IMR-90 (cell line): ENCODE measurements at regions of chr15 and their contacts with region 1.

Region 1: DNA sequence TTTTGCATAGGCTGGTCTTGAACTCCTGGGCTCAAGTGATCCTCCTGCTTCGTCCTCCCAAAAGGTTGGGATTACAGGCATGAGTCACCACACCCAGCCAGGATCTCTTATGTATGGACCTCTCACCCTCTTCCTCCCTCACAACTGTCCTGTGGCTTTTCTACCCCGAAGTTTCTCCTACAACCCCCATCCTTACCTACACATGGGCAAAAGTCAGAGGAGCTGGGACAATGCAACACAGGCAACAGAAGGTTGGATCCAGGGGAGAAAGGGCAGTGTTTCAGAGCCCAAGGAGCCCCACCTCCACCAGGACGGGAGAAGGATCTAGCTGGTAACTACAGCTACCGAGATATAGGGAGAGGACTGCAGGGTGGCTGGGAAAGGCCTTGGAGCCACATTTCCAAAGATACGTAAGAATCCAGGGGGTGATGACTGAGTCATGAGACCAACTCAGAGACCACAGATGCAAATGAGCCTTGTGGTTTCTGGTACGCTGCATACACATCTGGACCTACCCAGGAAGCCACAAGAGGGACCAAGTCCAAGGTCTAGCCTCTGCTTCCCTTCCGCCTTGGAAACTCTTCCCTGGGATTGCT is 13.6 kb downstream of the IGDCC4 start:
- DNase-seq: peak; percentile 99
- ATAC-seq: peak; percentile 90
- H3K4me3 ChIP-seq: no peak overlapping the region
- H3K27ac ChIP-seq: no peak overlapping the region
- H3K4me1 ChIP-seq: peaks cover 5% of the 10 kb centered on the region
- H3K27me3 ChIP-seq: peaks cover 5% of the 10 kb centered on the region; the same call in 1 of the 2 replicates
- CTCF ChIP-seq: peak; percentile 24; the same call in 1 of the 2 replicates
- POLR2A ChIP-seq: no peak
- RAD21 ChIP-seq: peak; percentile 22; the same call in 1 of the 2 replicates

Region 2: DNA sequence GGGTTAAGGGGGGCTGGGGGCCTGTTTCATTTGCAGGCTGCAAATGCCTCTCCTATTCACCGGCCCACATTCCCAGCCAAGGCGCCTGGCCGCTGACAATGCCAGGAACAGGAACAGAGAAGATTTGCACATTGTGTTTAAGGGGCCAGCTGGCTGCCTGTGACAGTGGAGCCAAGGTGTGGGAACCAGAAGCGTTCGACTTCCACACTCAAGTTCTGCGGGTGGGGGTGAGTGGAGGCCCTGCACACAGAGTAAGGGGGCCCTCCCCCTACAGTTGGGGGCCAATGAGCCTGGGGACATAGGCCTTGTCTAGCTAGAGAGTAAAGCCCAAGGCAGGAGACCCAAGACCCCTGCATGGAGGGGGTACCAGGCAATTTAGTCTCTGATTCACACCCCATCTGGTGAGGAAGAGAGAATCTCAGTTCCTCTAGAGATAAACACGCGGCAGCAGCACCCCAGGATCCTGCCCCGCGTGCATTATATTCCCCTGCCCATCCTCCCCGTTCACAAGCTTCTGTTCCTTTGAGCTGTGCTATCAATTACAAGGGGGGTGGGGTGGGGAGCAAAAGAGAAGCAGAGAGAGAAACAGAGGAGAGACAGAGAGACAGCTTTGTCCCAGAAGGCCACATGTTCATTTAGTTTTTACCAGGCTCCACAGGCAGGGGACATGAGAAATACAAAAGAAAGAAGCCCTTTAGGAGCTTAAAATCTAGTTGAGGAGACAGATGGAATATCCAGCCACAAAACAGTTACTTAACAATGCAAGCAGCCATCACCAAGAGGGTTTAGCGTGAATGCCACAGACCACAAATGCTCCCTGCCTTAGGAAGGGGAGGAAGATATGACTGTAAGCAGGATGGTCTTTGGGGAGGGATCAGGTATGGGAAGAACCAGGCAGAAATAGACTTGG is 40.6 kb before region 1 on chr15:
- CTCF ChIA-PET with region 1: no interaction called
- POLR2A ChIA-PET with region 1: no interaction called
- dilution Hi-C with region 1: no loop called
- in situ Hi-C with region 1: no loop called
- intact Hi-C with region 1: no loop called
- DNase-seq: no peak
- ATAC-seq: no peak
- H3K4me3 ChIP-seq: no peak overlapping the region
- H3K27ac ChIP-seq: no peak overlapping the region
- H3K4me1 ChIP-seq: peaks cover 2% of the 10 kb centered on the region; the same call in 1 of the 2 replicates
- H3K27me3 ChIP-seq: peaks cover 60% of the 10 kb centered on the region
- CTCF ChIP-seq: no peak
- POLR2A ChIP-seq: no peak
- RAD21 ChIP-seq: no peak

Region 3: DNA sequence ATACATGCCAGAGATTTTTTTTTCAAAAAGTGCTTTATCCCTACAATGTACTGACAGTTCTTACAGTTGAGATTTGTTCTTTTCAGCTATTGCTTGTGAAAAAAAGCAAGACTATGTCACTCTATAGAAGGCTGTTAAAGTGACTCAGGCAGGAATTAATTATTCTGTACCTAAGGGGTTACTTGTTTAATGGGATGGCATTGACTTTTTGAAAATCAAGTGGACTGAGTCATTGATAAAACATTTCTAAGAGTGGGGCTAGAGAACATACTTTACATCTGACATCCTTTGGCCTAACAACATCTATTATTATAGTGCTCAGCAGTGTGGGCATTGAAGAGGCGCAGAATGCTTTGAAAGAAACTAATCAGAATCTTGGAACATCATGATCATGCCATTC is 167.5 kb after region 1 on chr15:
- CTCF ChIA-PET with region 1: no interaction called
- POLR2A ChIA-PET with region 1: no interaction called
- dilution Hi-C with region 1: no loop called
- in situ Hi-C with region 1: no loop called
- intact Hi-C with region 1: loop called (anchors 5 kb)
- DNase-seq: peak; percentile 57
- ATAC-seq: peak; percentile 41
- H3K4me3 ChIP-seq: no peak overlapping the region
- H3K27ac ChIP-seq: no peak overlapping the region
- H3K4me1 ChIP-seq: peaks cover 6% of the 10 kb centered on the region
- H3K27me3 ChIP-seq: no peaks in the 10 kb centered on the region
- CTCF ChIP-seq: no peak
- POLR2A ChIP-seq: no peak
- RAD21 ChIP-seq: no peak